HEK293 (cell line): ENCODE measurements at regions of chr17 and their contacts with region 1.

Region 1: GRCh38 chr17:79065105-79065670 is 9.4 kb upstream of the ENGASE start:
- H3K4me3 ChIP-seq: no peak overlapping the region
- H3K27ac ChIP-seq: no peak overlapping the region
- H3K4me1 ChIP-seq: no peaks in the 10 kb centered on the region
- CTCF ChIP-seq: no peak

Region 2: DNA sequence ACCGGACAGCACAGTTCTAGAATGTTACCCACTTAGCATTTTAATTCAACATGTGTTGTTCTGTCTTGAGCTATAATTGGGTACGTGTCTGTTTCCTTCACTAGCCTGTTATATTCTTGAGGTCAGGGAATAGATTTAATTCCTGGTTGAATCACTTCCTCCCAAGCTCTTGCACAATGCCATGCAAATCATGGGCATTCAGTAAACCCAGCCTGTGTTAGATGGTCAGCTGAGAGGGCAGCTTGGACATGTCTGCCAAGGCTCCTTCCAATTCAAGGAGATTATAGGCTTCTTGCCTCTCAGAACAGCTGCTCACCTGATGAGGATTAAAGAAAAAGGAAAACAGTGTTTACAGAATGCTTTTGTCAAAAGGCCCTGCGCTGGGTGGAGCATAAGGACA is 28.6 kb before region 1 on chr17:
- CTCF ChIA-PET with region 1: interaction called, 11 read pairs
- POLR2A ChIA-PET with region 1: no interaction called
- H3K4me3 ChIP-seq: no peak overlapping the region
- H3K27ac ChIP-seq: no peak overlapping the region
- H3K4me1 ChIP-seq: peaks cover 8% of the 10 kb centered on the region; the same call in 1 of the 2 replicates
- CTCF ChIP-seq: no peak

Region 3: DNA sequence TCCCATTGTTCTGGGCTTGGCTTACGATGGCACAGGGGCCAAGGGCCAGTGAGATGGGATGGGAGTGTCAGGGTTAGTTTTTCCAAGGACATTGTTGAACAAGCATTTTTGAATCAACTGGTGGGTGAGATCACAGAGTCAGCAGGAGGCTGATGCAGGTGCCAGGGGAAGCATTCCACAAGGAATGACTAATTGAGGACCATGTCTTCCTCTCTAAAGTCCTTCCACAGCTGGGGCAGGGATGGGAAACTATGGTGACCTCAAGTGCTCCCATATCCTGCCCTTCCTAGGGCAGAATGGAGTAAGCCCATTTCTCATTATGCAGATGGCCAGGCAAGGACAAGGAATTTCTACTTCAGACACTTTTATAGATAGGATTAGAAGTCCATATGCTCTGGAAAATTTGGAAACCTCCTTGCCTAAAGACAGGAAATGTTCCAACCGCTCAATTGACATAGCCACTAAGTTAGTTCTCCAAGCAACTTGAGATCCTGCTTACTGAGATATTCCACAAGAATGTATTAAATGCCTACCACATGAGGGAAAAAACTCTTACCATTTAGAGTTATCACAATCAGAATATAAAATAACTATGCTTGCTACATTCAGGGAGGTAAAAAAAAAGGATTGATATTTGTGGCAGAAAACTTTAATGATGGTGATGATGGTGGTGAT is 11.8 kb before region 1 on chr17:
- CTCF ChIA-PET with region 1: interaction called, 20 read pairs
- POLR2A ChIA-PET with region 1: interaction called, 3 read pairs
- H3K4me3 ChIP-seq: no peak overlapping the region
- H3K27ac ChIP-seq: no peak overlapping the region
- H3K4me1 ChIP-seq: no peaks in the 10 kb centered on the region
- CTCF ChIP-seq: no peak

Region 4: DNA sequence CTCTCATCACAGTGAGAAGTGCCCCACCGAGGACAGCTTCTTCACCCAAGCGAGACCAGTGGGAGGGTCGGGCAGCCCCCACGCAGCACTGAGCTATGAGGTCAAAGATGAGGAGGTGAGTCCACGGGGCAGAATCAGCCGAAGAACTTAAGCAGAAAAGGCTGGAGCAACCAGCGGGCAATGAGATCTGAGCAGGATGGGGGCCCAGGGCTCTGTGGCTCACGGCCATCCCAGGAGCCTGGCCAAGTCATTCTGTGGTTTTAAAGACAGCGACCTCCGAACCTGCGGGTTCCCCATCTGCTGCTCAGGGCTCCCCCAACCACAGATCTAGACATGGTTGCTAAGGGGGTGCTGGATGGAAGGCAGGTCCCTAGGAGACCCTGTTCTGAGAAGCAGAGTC is 343.1 kb after region 1 on chr17:
- CTCF ChIA-PET with region 1: no interaction called
- POLR2A ChIA-PET with region 1: no interaction called
- H3K4me3 ChIP-seq: no peak overlapping the region
- H3K27ac ChIP-seq: no peak overlapping the region
- H3K4me1 ChIP-seq: no peaks in the 10 kb centered on the region
- CTCF ChIP-seq: no peak